ENCODE measurements at regions of chr2 and their contacts with region 1.

Region 1: DNA sequence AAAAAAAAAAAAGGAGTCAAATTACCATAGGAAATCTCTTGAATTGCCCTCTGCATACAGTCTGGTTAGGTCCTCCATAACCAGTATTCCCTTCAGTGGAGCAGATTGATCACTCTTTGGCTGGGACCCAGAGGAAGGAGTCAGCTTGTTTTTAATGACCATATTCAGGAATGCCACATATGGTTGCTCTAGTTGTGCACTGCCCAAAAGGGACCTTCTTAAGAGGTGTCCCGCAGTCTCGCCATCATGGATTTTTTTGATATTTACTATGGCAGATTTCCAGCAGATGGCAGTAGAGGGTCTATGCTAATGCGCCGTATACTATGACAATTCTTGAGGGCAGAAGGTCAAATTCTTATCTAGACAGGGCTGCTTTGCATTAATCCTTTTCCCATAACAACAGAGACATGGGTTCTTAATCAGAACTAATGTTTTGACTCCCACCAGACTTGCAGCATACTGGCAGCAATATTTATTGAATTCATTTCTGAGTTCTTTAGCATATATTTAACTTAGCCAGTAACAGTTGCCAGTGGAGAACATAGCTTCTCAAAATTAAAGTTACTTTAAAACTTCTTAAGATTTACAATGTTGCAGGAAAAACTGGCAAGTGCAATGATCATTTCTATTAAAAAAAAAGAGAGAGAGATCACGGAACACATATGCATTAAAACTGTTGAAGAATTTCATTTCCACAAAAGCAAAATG is 31.8 kb upstream of the INPP4A start:
- DNase-seq: peak in 8 of 9 donors; percentile 48 to 80 (median 72)
- ATAC-seq: peak; percentile 97
- H3K4me3 ChIP-seq: no peak overlapping the region
- H3K4me3 Mint-ChIP-seq: no peak overlapping the region
- H3K27ac ChIP-seq: no peak overlapping the region
- H3K27ac Mint-ChIP-seq: peak overlapping the region in 2 of 9 donors; percentile 44 to 46
- H3K4me1 ChIP-seq: peaks cover 0 to 5% of the 10 kb centered on the region in 2 donors
- H3K4me1 Mint-ChIP-seq: peaks cover 4 to 14% (median 6%) of the 10 kb centered on the region in 7 donors
- H3K27me3 ChIP-seq: no peaks in the 10 kb centered on the region
- H3K27me3 Mint-ChIP-seq: peaks cover 0 to 6% (median 0%) of the 10 kb centered on the region in 5 donors

Region 2: GRCh38 chr2:98396745-98397355 is 16.1 kb before region 1 on chr2:
- CTCF ChIA-PET with region 1: no interaction called
- POLR2A ChIA-PET with region 1: no interaction called
- intact Hi-C with region 1: no loop called
- DNase-seq: no peak
- ATAC-seq: no peak
- H3K4me3 ChIP-seq: no peak overlapping the region
- H3K4me3 Mint-ChIP-seq: no peak overlapping the region
- H3K27ac ChIP-seq: no peak overlapping the region
- H3K27ac Mint-ChIP-seq: no peak overlapping the region
- H3K4me1 ChIP-seq: no peaks in the 10 kb centered on the region
- H3K4me1 Mint-ChIP-seq: no peaks in the 10 kb centered on the region
- H3K27me3 ChIP-seq: peaks cover 0 to 5% of the 10 kb centered on the region in 2 donors
- H3K27me3 Mint-ChIP-seq: peaks cover 25 to 47% (median 43%) of the 10 kb centered on the region in 5 donors

Region 3: DNA sequence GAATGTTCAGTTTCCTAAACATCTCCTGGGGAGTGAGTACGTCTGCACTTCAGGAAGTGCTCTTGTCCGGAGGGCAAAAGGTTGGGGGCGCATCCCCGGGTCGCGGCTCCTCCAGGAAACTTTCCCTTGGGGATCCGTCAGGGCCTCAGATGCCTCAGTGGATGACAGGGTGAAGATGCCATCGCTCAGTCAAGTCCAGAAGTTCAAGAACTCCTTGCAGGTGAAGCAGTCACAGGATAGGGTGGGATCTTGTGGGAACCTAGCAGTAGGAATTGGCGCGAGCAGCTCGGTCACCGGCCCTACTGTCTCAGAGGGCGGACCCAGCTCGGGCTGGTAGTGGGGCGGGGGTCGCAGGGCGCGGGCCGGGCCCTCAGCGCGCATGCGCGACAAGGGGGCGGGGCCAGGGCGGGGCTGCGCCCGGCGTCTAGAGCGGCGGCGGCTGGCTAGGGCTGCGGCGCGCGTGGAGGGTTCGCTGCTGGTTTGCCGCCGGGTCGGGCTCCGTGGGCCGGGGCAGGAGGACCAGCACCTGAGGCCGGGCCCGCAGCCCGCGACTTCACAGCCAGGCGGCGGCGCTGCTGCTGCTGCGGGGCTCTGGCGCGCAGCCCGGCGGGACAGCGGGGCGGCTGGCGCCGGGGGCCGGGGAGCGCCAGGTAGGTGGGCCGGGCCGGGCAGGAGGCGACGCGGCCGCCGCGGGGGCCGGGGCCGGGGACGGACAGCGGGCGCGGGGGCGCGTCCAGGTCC is 31.7 kb after region 1 on chr2 and contains the start of gene INPP4A:
- CTCF ChIA-PET with region 1: interaction called, 6 read pairs
- POLR2A ChIA-PET with region 1: no interaction called
- intact Hi-C with region 1: loop called (anchors 1 kb)
- DNase-seq: peak; percentile 67 to 86 (median 78)
- ATAC-seq: peak; percentile 82
- H3K4me3 ChIP-seq: peak within 1 kb of the TSS; percentile 93
- H3K4me3 Mint-ChIP-seq: peak within 1 kb of the TSS; percentile 91 to 99 (median 97)
- H3K27ac ChIP-seq: peak within 1 kb of the TSS; percentile 83
- H3K27ac Mint-ChIP-seq: peak within 1 kb of the TSS; percentile 91 to 99 (median 97)
- H3K4me1 ChIP-seq: peaks cover 21 to 37% of the 10 kb centered on the region in 2 donors
- H3K4me1 Mint-ChIP-seq: peaks cover 19 to 54% (median 39%) of the 10 kb centered on the region in 7 donors
- H3K27me3 ChIP-seq: no peaks in the 10 kb centered on the region
- H3K27me3 Mint-ChIP-seq: no peaks in the 10 kb centered on the region
- total RNA-seq, gene INPP4A: 126 to 165 (median 157) TPM

Region 4: DNA sequence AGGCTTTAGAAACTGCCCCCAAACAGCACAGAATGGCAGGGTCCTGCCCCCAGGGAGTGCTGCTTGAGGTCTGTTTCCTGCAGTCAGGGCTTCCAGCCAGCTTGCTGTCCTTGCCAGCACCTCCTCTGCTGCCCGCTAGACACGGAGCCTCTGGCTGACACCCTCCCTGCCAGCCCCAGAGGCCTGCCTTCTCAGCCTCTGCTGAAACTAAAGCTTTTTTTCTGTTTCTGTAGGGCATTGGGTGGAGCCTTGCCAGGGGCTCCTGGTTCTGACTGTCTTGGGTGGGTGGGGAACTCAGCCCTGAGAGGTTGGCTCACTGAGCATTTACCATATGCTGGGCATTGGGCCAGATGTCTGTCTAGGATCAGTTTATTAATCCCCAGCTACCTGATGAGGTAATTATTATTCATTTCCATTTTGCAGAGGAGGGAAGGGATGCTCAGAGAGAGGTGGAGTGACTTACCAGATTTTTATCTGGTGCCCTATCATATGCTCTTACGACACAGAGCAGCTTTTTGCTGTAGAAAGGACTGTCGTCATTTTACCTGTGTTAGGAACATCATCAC is 67.1 kb after region 1 on chr2:
- CTCF ChIA-PET with region 1: interaction called, 4 read pairs
- POLR2A ChIA-PET with region 1: interaction called, 5 read pairs
- intact Hi-C with region 1: loop called in 1 of 2 experiments (anchors 1 kb)
- DNase-seq: peak in 1 of 9 donors; percentile 70
- ATAC-seq: peak; percentile 58
- H3K4me3 ChIP-seq: peak overlapping the region; percentile 8
- H3K4me3 Mint-ChIP-seq: peak overlapping the region; percentile 41 to 82 (median 72)
- H3K27ac ChIP-seq: peak overlapping the region; percentile 64
- H3K27ac Mint-ChIP-seq: peak overlapping the region; percentile 81 to 95 (median 91)
- H3K4me1 ChIP-seq: peaks cover 87 to 97% of the 10 kb centered on the region in 2 donors
- H3K4me1 Mint-ChIP-seq: peaks cover 80 to 100% (median 98%) of the 10 kb centered on the region in 7 donors
- H3K27me3 ChIP-seq: no peaks in the 10 kb centered on the region
- H3K27me3 Mint-ChIP-seq: no peaks in the 10 kb centered on the region

Region 5: GRCh38 chr2:98518090-98518489 is 105.2 kb after region 1 on chr2:
- CTCF ChIA-PET with region 1: interaction called, 23 read pairs
- POLR2A ChIA-PET with region 1: interaction called, 4 read pairs
- intact Hi-C with region 1: loop called (anchors 1 kb)
- DNase-seq: peak; percentile 37 to 75 (median 66)
- ATAC-seq: peak; percentile 89
- H3K4me3 ChIP-seq: no peak overlapping the region
- H3K4me3 Mint-ChIP-seq: peak overlapping the region in 1 of 10 donors; percentile 16
- H3K27ac ChIP-seq: peak overlapping the region; percentile 9
- H3K27ac Mint-ChIP-seq: peak overlapping the region in 7 of 9 donors; percentile 24 to 75 (median 57)
- H3K4me1 ChIP-seq: peaks cover 30 to 49% of the 10 kb centered on the region in 2 donors
- H3K4me1 Mint-ChIP-seq: peaks cover 34 to 64% (median 58%) of the 10 kb centered on the region in 7 donors
- H3K27me3 ChIP-seq: no peaks in the 10 kb centered on the region
- H3K27me3 Mint-ChIP-seq: no peaks in the 10 kb centered on the region

Region 6: DNA sequence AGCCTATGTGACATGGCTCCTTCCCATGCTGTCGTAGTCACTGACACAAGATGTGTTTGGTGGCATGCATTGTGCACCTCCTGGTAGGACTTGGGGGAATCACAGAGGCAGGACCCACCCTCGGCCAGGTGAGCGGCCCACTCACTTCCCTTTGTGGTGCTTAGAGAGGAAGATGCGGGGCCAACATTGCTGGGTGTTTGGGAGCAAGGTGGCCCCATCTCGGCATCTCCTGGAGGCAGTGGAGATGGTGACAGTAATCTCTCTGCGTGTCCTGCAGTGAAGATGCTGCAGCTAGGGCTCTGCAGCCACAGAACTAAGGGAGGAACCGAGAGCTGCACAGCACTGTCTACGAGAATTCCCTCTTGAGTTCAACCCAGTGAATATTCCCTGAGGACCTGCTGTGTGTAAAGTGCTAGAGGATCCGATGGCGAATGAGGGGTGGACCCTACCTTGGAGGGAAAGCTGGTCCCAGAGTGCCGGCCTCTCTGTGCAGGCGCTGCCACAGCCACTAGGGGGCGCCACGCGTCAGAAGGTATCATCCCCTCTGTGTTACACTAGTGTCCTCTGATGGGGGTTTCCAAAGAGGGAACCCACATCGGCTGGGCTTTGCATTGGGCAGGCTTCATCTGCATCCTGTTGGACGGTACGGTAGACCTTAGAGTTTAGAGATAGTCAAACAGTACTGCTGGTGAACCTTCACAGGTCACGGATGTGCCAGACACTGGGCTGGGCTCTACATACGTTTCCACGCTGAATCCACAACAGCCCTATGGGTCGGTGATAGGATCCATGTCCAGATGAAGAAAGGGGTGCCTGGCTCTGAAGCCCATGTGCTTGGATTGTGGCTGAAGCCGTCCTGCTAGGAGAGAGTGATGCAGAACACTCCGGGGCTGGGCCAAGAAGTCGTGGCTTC is 156.2 kb after region 1 on chr2:
- CTCF ChIA-PET with region 1: interaction called, 3 read pairs
- POLR2A ChIA-PET with region 1: no interaction called
- intact Hi-C with region 1: loop called in 1 of 2 experiments (anchors 1 kb)
- DNase-seq: peak; percentile 43 to 78 (median 60)
- ATAC-seq: peak; percentile 84
- H3K4me3 ChIP-seq: no peak overlapping the region
- H3K4me3 Mint-ChIP-seq: no peak overlapping the region
- H3K27ac ChIP-seq: no peak overlapping the region
- H3K27ac Mint-ChIP-seq: peak overlapping the region in 8 of 9 donors; percentile 32 to 81 (median 57)
- H3K4me1 ChIP-seq: no peaks in the 10 kb centered on the region
- H3K4me1 Mint-ChIP-seq: peaks cover 0 to 20% (median 7%) of the 10 kb centered on the region in 7 donors
- H3K27me3 ChIP-seq: no peaks in the 10 kb centered on the region
- H3K27me3 Mint-ChIP-seq: no peaks in the 10 kb centered on the region

Region 7: DNA sequence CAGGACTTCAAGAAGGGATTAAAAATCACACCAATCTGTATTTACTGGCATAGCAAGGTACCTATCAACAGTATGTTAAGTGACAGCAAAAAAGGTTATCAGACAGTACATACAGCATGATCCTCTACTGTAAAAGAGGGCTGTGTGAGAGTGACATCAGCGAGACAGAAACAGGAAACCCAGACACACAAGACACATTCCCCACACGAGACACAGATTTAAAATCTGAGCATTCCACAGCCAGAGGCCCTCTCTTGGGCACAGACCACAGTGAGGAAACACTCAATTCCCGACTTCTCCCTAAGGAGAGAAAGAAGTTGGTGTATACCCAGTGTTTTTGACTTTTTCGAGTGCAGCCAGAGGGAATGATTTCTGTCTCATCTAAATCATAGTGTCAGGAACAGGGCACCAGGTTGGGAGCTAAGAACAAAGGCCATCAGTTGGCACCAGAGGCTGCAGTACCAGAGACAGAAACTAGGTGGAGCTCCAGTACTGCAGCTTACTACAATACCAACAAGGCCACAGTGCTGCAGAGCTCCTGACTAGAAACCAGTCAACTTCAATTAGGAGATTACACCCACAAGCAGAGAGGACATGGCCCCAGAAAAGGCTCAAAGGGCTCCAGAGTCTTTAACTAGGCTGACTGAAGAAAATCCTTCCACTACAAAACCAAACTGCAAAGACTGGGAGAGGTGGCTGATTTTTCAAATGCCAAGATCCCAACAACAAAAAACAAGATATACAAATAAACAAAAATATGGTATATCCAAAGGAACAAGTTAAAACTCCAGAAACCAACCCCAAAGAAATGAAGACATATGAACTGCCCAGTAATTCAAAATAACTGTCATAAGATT is 236.5 kb after region 1 on chr2:
- CTCF ChIA-PET with region 1: interaction called, 3 read pairs
- POLR2A ChIA-PET with region 1: no interaction called
- intact Hi-C with region 1: loop called in 1 of 2 experiments (anchors 2 kb)
- DNase-seq: peak; percentile 53 to 87 (median 80)
- ATAC-seq: peak; percentile 99
- H3K4me3 ChIP-seq: no peak overlapping the region
- H3K4me3 Mint-ChIP-seq: peak overlapping the region in 8 of 10 donors; percentile 5 to 66 (median 50)
- H3K27ac ChIP-seq: peak overlapping the region; percentile 39
- H3K27ac Mint-ChIP-seq: peak overlapping the region; percentile 73 to 96 (median 92)
- H3K4me1 ChIP-seq: peaks cover 29 to 44% of the 10 kb centered on the region in 2 donors
- H3K4me1 Mint-ChIP-seq: peaks cover 40 to 66% (median 57%) of the 10 kb centered on the region in 7 donors
- H3K27me3 ChIP-seq: no peaks in the 10 kb centered on the region
- H3K27me3 Mint-ChIP-seq: no peaks in the 10 kb centered on the region

Region 8: DNA sequence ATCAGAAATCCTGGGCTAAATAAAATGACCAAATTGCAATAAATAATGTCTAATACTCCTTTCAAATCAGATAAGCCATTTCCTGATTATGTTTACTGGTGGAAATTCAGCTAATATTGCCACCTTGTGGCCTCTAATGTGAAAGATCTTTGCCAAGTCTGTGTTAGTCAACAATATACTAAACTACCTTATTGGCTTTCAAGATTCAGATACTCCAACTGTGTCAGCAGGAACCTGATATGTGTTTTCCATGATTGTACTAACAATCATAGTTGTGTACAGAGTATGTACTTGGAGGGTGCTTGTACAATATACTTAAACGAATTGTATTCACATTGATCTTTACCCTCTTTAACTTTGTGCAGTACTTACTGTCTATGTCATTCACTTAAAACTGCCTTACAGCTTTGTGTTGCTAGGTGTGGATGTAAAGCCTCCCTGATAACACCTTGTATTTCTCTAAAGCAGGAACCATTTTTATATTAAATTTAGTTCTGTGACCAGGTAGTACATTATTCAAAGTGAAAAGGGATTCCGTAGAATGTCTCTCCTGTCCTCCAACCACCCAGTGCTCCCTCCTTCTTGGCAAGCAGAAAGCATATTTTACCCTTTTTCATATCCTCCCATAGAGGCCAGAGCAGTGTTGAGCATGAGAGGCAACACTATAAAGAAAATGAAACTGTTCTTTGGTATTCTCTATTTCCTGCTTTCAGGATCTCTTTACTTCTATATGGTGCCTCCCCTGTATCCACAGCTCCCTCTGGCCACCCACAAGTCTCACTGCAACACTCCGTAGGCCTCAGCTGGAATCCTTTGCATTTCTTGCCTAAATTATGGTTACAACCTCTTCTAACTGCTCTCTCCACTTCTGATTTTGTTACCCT is 653.4 kb after region 1 on chr2:
- CTCF ChIA-PET with region 1: no interaction called
- POLR2A ChIA-PET with region 1: no interaction called
- intact Hi-C with region 1: loop called in 1 of 2 experiments (anchors 2 kb)
- DNase-seq: peak in 7 of 9 donors; percentile 22 to 54 (median 40)
- ATAC-seq: peak; percentile 93
- H3K4me3 ChIP-seq: no peak overlapping the region
- H3K4me3 Mint-ChIP-seq: no peak overlapping the region
- H3K27ac ChIP-seq: peak overlapping the region; percentile 52
- H3K27ac Mint-ChIP-seq: no peak overlapping the region
- H3K4me1 ChIP-seq: peaks cover 8 to 23% of the 10 kb centered on the region in 2 donors
- H3K4me1 Mint-ChIP-seq: peaks cover 0 to 6% (median 0%) of the 10 kb centered on the region in 7 donors
- H3K27me3 ChIP-seq: no peaks in the 10 kb centered on the region
- H3K27me3 Mint-ChIP-seq: peaks cover 0 to 3% (median 0%) of the 10 kb centered on the region in 5 donors